Caco-2 (cell line): ENCODE measurements at regions of chr15 and their contacts with region 1.

Region 1: DNA sequence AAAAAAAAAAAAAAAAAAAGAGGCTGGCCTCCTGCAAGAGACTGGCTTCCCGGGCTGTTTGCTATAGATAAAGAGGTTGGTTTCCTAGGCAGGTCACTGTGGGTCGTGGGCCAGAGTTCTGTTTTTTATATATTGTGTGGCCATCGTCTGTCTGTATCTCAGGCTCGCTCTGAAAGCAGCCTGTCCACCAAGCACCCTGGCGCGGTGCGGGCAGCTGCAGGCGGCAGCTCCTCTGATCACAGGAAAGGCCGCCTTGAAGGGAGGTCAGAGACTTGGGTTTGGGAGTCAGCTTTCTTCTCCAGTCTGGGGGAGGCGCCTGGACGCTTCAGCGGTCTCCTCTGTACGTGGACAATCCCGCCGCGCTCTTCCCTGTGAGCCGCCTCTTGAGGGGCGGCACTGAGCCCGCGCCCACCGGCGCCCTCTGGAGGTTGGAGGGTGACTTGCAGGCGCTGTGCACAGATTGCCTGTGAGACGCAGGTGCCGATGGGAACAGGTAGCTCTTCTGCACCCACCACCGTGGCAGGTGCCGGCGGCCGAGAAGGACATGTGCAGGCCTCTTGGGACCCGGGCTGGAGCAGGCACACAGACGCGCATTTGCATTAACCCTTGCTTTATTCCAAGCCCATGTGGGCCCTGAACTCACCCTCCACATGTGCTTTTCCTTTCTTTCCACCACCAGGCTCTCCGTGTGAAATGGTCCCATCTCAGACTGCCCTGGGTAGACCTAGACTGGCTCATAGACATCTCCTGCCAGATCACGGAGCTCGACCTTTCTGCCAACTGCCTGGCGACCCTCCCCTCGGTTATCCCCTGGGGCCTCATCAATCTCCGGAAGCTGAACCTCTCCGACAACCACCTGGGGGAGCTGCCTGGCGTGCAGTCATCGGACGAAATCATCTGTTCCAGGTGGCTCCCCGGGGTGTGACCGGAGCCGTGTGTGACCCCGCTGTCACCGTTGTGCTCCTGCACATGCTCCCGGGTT is 89.3 kb downstream of the LRRK1 start:
- DNase-seq: peak; percentile 53 to 71
- H3K4me3 ChIP-seq: no peak overlapping the region
- H3K4me3 Mint-ChIP-seq: no peak overlapping the region
- H3K27ac Mint-ChIP-seq: no peak overlapping the region
- H3K4me1 ChIP-seq: peaks cover 14% of the 10 kb centered on the region; the same call in 1 of the 2 replicates
- H3K4me1 Mint-ChIP-seq: peaks cover 12% of the 10 kb centered on the region
- H3K27me3 ChIP-seq: no peaks in the 10 kb centered on the region
- H3K27me3 Mint-ChIP-seq: no peaks in the 10 kb centered on the region
- CTCF ChIP-seq: peak; percentile 72 to 85

Region 2: DNA sequence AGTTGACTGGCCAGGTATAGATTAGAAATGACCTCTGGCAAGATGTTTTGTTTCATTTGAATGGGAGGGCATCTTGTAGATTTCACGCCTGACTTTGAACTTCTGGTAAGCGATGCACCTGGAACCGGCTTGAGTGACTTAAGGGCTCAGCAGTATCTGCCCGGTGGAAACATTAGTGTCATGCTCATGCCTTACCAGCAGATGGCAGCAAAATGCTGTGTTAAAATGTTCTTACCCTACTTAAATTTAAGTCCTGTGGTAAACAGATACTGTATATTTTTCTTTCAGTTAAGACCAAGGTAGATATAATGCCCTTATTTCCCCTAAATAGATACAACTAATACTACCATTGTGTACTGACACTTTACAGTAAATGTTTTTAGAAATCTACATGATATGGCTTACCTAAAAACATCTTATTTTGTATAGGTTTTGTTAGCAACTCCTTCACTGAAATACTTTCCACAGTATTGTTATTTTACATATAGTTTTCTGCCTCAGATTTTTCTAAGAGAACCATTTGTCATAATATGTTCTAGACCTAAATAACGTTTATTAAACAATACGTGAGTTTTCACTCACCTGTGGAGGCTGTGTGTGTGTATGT is 380.6 kb before region 1 on chr15:
- CTCF ChIA-PET with region 1: no interaction called
- POLR2A ChIA-PET with region 1: no interaction called
- intact Hi-C with region 1: loop called (anchors 1 kb)
- DNase-seq: peak; percentile 57 to 67
- H3K4me3 ChIP-seq: no peak overlapping the region
- H3K4me3 Mint-ChIP-seq: no peak overlapping the region
- H3K27ac Mint-ChIP-seq: no peak overlapping the region
- H3K4me1 ChIP-seq: no peaks in the 10 kb centered on the region
- H3K4me1 Mint-ChIP-seq: peaks cover 2% of the 10 kb centered on the region
- H3K27me3 ChIP-seq: no peaks in the 10 kb centered on the region
- H3K27me3 Mint-ChIP-seq: no peaks in the 10 kb centered on the region
- CTCF ChIP-seq: peak; percentile 59 to 69

Region 3: DNA sequence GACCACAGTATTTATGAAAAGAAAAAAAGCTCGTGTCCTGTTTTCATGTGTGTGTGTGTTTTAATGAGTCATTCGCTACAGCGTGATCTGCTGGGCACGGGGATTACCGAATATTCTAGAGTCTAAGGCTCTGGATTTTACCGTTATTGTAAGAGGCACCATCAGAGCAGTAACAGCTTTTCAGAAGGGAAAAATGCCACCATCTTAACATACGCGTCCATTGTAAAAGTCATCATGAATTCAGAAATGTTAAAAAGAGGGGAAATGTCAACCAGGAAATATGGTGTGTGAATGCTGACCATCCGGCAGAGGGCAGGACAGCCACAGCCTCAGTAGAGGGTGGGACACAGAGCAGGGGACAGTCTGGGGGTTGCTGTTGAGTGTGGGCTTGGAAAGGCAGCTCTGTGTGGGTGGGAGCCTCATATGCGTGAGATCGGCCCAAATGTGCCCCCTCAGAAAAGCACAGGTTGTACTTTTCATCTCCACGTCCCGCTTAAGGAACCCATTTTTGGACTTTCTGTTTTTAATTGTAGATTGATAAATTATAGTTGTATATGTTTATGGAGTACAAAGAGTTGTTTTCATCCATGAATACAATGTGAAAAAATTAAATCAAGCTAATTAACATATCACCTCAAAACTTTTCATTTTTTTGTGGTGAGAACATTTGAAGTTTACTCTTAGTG is 336.4 kb before region 1 on chr15:
- CTCF ChIA-PET with region 1: no interaction called
- POLR2A ChIA-PET with region 1: no interaction called
- intact Hi-C with region 1: loop called (anchors 1 kb)
- DNase-seq: peak; percentile 52 to 66
- H3K4me3 ChIP-seq: no peak overlapping the region
- H3K4me3 Mint-ChIP-seq: peak overlapping the region; percentile 51
- H3K27ac Mint-ChIP-seq: no peak overlapping the region
- H3K4me1 ChIP-seq: 0 out of 2 replicates have a peak, but pooled peaks cover 4% of the 10 kb centered on the region
- H3K4me1 Mint-ChIP-seq: peaks cover 9% of the 10 kb centered on the region
- H3K27me3 ChIP-seq: no peaks in the 10 kb centered on the region
- H3K27me3 Mint-ChIP-seq: no peaks in the 10 kb centered on the region
- CTCF ChIP-seq: peak; percentile 59

Region 4: DNA sequence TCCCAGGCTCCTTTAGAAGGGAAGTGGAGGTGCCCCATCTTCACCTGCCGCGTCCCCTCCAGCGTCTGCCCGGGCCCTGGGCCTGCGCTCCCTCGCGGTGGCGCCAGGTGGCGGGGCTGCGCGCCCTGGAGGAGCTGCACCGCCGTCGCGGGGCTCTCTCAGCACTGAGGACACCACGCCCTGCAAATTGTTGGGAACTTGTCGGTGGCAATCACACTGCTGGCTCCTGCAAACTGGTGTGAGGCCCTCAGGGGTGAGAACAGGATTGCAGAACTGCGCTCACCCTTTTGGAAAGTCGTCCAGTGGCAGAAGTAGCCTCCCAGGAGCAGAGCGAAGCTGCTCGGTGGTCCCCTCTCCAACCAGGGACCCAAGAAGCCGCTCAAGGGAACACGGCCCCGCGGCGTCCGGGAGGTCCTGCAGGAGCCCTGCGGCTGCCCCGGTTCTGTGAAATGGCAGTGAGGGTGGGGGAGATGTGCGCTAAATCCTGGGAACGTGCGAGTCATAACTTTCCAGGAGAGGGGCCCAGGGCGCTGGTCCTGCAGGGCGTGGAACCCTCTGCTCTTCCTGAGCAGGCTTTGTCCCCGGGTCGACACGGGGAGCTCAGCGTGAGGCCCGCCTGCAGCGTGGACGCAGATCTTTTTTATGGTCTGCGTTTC is 90.3 kb before region 1 on chr15:
- CTCF ChIA-PET with region 1: interaction called, 47 read pairs
- POLR2A ChIA-PET with region 1: interaction called, 3 read pairs
- intact Hi-C with region 1: loop called (anchors 1 kb)
- DNase-seq: peak; percentile 83 to 89
- H3K4me3 ChIP-seq: peak overlapping the region; percentile 83
- H3K4me3 Mint-ChIP-seq: peak overlapping the region; percentile 91
- H3K27ac Mint-ChIP-seq: no peak overlapping the region
- H3K4me1 ChIP-seq: no peaks in the 10 kb centered on the region
- H3K4me1 Mint-ChIP-seq: peaks cover 6% of the 10 kb centered on the region
- H3K27me3 ChIP-seq: no peaks in the 10 kb centered on the region
- H3K27me3 Mint-ChIP-seq: no peaks in the 10 kb centered on the region
- CTCF ChIP-seq: peak; percentile 76 to 87

Region 5: GRCh38 chr15:100958326-100959065 is 50.0 kb before region 1 on chr15:
- CTCF ChIA-PET with region 1: no interaction called
- POLR2A ChIA-PET with region 1: no interaction called
- intact Hi-C with region 1: loop called (anchors 5 kb)
- DNase-seq: no peak
- H3K4me3 ChIP-seq: no peak overlapping the region
- H3K4me3 Mint-ChIP-seq: no peak overlapping the region
- H3K27ac Mint-ChIP-seq: no peak overlapping the region
- H3K4me1 ChIP-seq: 0 out of 2 replicates have a peak, but pooled peaks cover 3% of the 10 kb centered on the region
- H3K4me1 Mint-ChIP-seq: no peaks in the 10 kb centered on the region
- H3K27me3 ChIP-seq: no peaks in the 10 kb centered on the region
- H3K27me3 Mint-ChIP-seq: no peaks in the 10 kb centered on the region
- CTCF ChIP-seq: no peak

Region 6: GRCh38 chr15:101020945-101021344 is 12.5 kb after region 1 on chr15:
- CTCF ChIA-PET with region 1: interaction called, 16 read pairs
- POLR2A ChIA-PET with region 1: no interaction called
- intact Hi-C with region 1: no loop called
- DNase-seq: no peak
- H3K4me3 ChIP-seq: no peak overlapping the region
- H3K4me3 Mint-ChIP-seq: no peak overlapping the region
- H3K27ac Mint-ChIP-seq: no peak overlapping the region
- H3K4me1 ChIP-seq: no peaks in the 10 kb centered on the region
- H3K4me1 Mint-ChIP-seq: no peaks in the 10 kb centered on the region
- H3K27me3 ChIP-seq: no peaks in the 10 kb centered on the region
- H3K27me3 Mint-ChIP-seq: no peaks in the 10 kb centered on the region
- CTCF ChIP-seq: no peak

Region 7: GRCh38 chr15:101143316-101143715 is 134.9 kb after region 1 on chr15:
- CTCF ChIA-PET with region 1: no interaction called
- POLR2A ChIA-PET with region 1: no interaction called
- intact Hi-C with region 1: no loop called
- DNase-seq: no peak
- H3K4me3 ChIP-seq: no peak overlapping the region
- H3K4me3 Mint-ChIP-seq: no peak overlapping the region
- H3K27ac Mint-ChIP-seq: no peak overlapping the region
- H3K4me1 ChIP-seq: no peaks in the 10 kb centered on the region
- H3K4me1 Mint-ChIP-seq: no peaks in the 10 kb centered on the region
- H3K27me3 ChIP-seq: no peaks in the 10 kb centered on the region
- H3K27me3 Mint-ChIP-seq: no peaks in the 10 kb centered on the region
- CTCF ChIP-seq: no peak

Region 8: DNA sequence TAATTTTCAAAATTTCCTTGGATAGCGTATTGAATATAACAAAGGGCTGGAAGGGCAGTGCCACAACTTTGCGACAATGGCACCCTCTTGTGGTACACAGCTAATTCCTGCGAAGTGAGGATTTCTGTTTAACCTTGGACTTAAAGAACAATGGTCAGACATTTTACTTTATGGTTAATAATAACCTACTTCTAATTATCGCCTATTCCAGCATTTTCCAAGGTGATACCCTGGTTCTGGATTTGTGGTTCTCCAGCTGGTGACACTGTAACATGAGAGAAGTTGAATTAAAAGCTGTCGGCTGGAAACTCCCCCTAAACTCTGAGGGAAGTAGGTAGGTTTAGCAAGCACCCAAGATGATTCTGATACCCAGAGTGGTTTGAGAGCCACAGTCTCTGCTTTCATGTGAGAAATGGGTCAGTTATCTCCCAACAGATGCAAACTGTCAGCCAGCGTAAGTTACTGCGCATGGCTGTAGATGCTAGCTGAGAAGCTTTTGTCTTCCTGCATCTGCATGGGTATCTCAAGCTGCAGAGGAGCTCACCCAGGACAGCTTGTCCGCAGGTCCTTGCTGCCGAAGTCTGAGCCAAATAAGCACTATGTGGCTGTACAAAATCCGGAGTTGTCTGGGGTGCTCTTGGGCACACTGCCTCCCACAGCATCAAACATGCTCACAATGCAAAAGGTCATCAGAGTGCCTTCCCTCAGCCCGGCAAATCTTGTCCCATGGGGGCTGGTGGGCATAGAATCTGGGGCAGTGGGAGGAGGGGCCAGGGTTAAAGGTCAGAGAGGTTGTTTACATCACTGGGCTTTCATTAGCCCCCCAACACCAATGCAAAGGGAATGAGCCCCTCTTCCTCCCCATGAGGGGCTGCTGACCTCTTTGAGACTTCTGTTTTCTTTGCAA is 250.0 kb after region 1 on chr15:
- CTCF ChIA-PET with region 1: interaction called, 14 read pairs
- POLR2A ChIA-PET with region 1: no interaction called
- intact Hi-C with region 1: no loop called
- DNase-seq: peak in 1 of 2 experiments; percentile 64
- H3K4me3 ChIP-seq: no peak overlapping the region
- H3K4me3 Mint-ChIP-seq: no peak overlapping the region
- H3K27ac Mint-ChIP-seq: no peak overlapping the region
- H3K4me1 ChIP-seq: no peaks in the 10 kb centered on the region
- H3K4me1 Mint-ChIP-seq: no peaks in the 10 kb centered on the region
- H3K27me3 ChIP-seq: no peaks in the 10 kb centered on the region
- H3K27me3 Mint-ChIP-seq: peaks cover 2% of the 10 kb centered on the region
- CTCF ChIP-seq: peak; percentile 70 to 84